WTC11 (cell line): ENCODE measurements at regions of chr1 and their contacts with region 1.

Region 1: GRCh38 chr1:22025368-22026155 is 24.1 kb downstream of the CELA3A start:
- DNase-seq: peak; percentile 84
- ATAC-seq: peak; percentile 92
- H3K4me3 Mint-ChIP-seq: peak overlapping the region; percentile 89
- H3K27ac Mint-ChIP-seq: peak overlapping the region; percentile 92
- H3K4me1 Mint-ChIP-seq: peaks cover 24% of the 10 kb centered on the region
- H3K27me3 Mint-ChIP-seq: no peaks in the 10 kb centered on the region
- CTCF ChIP-seq: no peak

Region 2: DNA sequence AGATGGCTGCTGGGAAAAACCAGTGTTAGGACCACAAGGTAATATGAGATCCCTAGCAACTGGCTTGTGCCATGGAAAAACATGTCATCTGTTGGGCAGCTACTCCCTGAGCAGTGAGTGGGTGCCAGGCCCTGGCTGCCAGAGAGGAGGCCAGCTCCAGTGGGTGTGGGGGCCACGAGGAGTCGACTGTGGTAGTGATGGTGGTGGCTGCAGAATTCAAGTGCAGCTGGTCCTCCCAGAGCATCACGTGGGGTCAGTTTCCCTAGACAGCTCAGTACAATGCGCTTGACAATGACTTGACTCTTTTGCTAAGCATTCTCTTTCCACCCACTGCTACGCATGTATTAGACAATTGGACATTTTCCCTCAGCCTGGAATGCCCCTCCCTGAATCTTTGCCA is 12.5 kb after region 1 on chr1:
- CTCF ChIA-PET with region 1: interaction called, 13 read pairs
- POLR2A ChIA-PET with region 1: interaction called, 3 read pairs
- DNase-seq: no peak
- ATAC-seq: no peak
- H3K4me3 Mint-ChIP-seq: no peak overlapping the region
- H3K27ac Mint-ChIP-seq: no peak overlapping the region
- H3K4me1 Mint-ChIP-seq: peaks cover 31% of the 10 kb centered on the region
- H3K27me3 Mint-ChIP-seq: no peaks in the 10 kb centered on the region
- CTCF ChIP-seq: no peak

Region 3: GRCh38 chr1:22052115-22053016 is 26.8 kb after region 1 on chr1 and contains the start of gene CDC42:
- CTCF ChIA-PET with region 1: interaction called, 8 read pairs
- POLR2A ChIA-PET with region 1: interaction called, 12 read pairs
- DNase-seq: peak; percentile 95
- ATAC-seq: peak; percentile 93
- H3K4me3 Mint-ChIP-seq: peak within 1 kb of the TSS; percentile 92
- H3K27ac Mint-ChIP-seq: peak within 1 kb of the TSS; percentile 89
- H3K4me1 Mint-ChIP-seq: peaks cover 24% of the 10 kb centered on the region
- H3K27me3 Mint-ChIP-seq: no peaks in the 10 kb centered on the region
- CTCF ChIP-seq: no peak
- total RNA-seq, gene CDC42: 169 to 182 TPM (median 171 TPM) in 3 replicates

Region 4: DNA sequence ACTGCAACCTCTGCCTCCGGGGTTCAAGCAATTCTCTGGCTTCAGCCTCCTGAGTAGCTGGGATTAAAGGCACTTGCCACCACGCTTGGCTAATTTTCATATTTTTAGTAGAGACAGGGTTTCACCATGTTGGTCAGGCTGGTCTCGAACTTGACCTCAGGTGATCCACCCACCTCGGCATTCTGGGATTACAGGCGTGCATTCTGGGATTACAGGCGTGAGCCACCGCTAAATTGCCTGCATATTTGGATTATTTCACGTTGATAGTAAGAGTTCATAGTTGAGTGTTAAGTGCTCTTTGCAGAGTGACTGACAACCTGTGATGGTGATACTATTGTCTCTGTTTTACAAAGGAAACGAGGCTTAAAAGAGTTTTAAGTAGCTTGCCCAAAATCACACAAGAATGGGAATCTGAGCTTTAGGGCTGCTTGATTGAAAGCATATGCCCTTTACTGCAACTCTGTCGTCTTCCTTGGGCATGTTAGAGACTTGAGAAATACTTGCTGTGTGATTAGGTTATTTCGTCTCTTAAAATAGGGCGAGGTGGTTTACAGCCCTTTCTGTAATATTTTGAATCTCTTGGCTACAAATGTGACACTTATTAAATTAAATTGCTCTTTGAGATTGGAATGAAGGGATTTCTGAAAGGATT is 39.3 kb after region 1 on chr1:
- CTCF ChIA-PET with region 1: interaction called, 12 read pairs
- POLR2A ChIA-PET with region 1: no interaction called
- DNase-seq: no peak
- ATAC-seq: no peak
- H3K4me3 Mint-ChIP-seq: no peak overlapping the region
- H3K27ac Mint-ChIP-seq: peak overlapping the region; percentile 47; the same call in 1 of the 2 replicates
- H3K4me1 Mint-ChIP-seq: peaks cover 51% of the 10 kb centered on the region
- H3K27me3 Mint-ChIP-seq: no peaks in the 10 kb centered on the region
- CTCF ChIP-seq: no peak

Region 5: DNA sequence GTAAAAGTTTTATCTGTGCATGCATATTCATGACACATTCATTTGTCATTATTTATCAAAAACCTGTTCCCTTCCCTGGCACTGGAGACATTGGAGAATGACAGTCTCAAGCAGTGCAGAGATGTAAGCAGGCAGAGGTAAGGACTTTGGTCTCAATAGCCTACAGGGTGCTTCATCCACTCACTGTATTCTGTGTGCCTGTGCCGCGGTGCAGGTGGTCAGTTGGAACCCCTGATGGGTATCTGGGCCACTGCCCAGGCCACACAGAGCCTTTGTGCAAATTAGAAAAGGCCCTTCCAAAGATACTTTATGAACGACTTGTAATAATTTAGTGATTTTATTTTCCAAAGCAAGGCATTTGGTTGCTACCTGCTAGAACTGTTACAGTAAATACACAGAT is 70.9 kb after region 1 on chr1:
- CTCF ChIA-PET with region 1: no interaction called
- POLR2A ChIA-PET with region 1: no interaction called
- DNase-seq: no peak
- ATAC-seq: no peak
- H3K4me3 Mint-ChIP-seq: no peak overlapping the region
- H3K27ac Mint-ChIP-seq: no peak overlapping the region
- H3K4me1 Mint-ChIP-seq: peaks cover 18% of the 10 kb centered on the region
- H3K27me3 Mint-ChIP-seq: no peaks in the 10 kb centered on the region
- CTCF ChIP-seq: no peak